MCF 10A (cell line): ENCODE measurements at regions of chr1 and their contacts with region 1.

Region 1: DNA sequence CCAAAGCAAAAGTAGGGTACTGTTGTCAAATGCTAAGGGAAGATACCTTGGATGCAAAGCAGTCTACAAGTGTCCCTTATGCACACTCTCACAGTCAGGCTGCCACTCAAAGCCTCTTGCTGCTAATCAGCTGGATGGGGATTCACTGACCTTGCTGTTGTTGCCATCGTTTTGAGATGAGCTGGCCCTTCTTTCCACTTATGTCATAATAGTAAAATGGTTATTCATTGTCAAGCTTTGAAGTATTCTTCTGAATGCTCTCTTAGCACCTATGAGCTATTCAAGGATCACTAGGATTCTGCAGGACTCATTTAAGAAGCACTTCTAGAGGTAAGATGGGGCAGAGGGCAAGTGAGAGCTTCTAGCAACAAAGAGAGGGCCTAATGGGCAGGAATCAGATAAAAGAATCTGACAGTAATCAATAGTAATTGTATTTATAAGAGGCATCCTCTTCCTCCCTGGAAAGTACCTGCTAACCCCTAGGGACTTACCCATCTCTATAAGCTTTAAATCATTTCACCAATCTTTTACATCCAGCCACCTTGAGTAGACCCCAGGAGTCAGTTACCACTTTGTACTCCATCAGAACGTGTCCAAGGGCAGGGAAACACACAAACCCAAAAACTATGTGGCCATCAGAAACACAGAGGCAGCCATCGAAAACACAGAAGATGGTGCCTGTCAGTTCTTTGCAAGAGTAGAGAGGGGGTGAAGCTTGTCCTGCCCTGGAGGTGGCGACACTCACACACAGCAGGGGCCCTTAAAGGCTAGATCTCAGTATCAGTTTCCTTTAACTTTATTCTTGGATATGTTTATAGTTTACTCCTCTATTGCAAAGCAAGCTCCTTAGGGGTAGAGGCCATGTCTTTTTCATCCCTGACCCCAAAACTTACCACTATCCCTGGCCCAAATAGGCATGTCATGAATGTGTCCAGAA is 103.7 kb upstream of the NFIA start:
- DNase-seq: peak; percentile 62
- H3K4me3 Mint-ChIP-seq: no peak overlapping the region
- H3K27ac Mint-ChIP-seq: no peak overlapping the region
- H3K4me1 Mint-ChIP-seq: peaks cover 3% of the 10 kb centered on the region
- H3K27me3 Mint-ChIP-seq: no peaks in the 10 kb centered on the region
- CTCF ChIP-seq: peak; percentile 76

Region 2: GRCh38 chr1:60281360-60281932 is 697.2 kb before region 1 on chr1:
- CTCF ChIA-PET with region 1: interaction called, 12 read pairs
- POLR2A ChIA-PET with region 1: no interaction called
- intact Hi-C with region 1: loop called (anchors 2 kb)
- DNase-seq: peak; percentile 85
- H3K4me3 Mint-ChIP-seq: no peak overlapping the region
- H3K27ac Mint-ChIP-seq: no peak overlapping the region
- H3K4me1 Mint-ChIP-seq: peaks cover 17% of the 10 kb centered on the region
- H3K27me3 Mint-ChIP-seq: no peaks in the 10 kb centered on the region
- CTCF ChIP-seq: peak; percentile 94

Region 3: DNA sequence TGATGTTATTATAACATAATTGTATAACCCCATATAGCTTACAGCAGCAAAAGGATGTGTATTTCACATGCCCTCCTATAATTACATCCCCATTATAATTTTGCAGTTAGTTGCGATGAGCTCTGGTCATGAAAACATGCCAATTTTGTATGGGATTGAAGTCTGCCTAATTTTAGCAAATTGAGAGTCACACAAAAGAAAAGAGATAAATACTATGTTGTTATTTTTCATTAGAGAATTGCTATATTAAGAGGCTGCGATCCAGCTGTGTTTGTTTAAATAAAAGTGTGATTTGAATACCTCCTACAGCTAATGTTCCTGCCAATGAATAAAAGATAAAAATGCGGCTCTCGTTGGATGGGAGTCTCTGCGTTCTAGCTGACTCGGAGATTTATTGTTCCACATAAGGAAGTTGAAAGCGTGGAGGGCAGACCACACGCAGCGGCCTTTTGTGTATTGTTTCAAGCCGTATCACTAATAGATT is 357.3 kb before region 1 on chr1:
- CTCF ChIA-PET with region 1: no interaction called
- POLR2A ChIA-PET with region 1: no interaction called
- intact Hi-C with region 1: no loop called
- DNase-seq: no peak
- H3K4me3 Mint-ChIP-seq: no peak overlapping the region
- H3K27ac Mint-ChIP-seq: no peak overlapping the region
- H3K4me1 Mint-ChIP-seq: no peaks in the 10 kb centered on the region
- H3K27me3 Mint-ChIP-seq: no peaks in the 10 kb centered on the region
- CTCF ChIP-seq: no peak

Region 4: DNA sequence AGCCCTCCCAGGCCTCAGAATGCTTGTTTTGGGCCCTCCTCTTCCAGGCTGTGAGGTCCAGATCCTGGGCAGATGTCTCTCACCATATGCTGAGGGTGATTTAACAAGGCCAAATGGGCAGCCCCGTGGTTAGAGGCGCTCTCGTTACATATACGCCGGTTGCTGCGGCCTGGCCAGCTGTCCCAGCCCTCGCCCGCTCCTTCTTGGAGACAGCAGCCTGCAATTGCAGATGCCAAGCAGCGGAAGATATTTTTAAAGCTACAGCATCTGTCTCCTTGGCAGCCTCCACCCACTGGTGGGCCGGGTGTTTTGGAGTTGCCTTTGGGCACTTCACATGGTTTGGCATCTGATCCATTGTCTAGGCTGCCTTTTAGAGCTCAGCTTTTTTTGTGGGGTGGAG is 75.1 kb before region 1 on chr1:
- CTCF ChIA-PET with region 1: no interaction called
- POLR2A ChIA-PET with region 1: no interaction called
- intact Hi-C with region 1: no loop called
- DNase-seq: no peak
- H3K4me3 Mint-ChIP-seq: no peak overlapping the region
- H3K27ac Mint-ChIP-seq: no peak overlapping the region
- H3K4me1 Mint-ChIP-seq: no peaks in the 10 kb centered on the region
- H3K27me3 Mint-ChIP-seq: no peaks in the 10 kb centered on the region
- CTCF ChIP-seq: no peak

Region 5: GRCh38 chr1:61005614-61006580 is 27.2 kb after region 1 on chr1:
- CTCF ChIA-PET with region 1: interaction called, 14 read pairs
- POLR2A ChIA-PET with region 1: no interaction called
- intact Hi-C with region 1: no loop called
- DNase-seq: no peak
- H3K4me3 Mint-ChIP-seq: no peak overlapping the region
- H3K27ac Mint-ChIP-seq: no peak overlapping the region
- H3K4me1 Mint-ChIP-seq: no peaks in the 10 kb centered on the region
- H3K27me3 Mint-ChIP-seq: no peaks in the 10 kb centered on the region
- CTCF ChIP-seq: no peak

Region 6: GRCh38 chr1:61049850-61050540 is 71.3 kb after region 1 on chr1:
- CTCF ChIA-PET with region 1: interaction called, 100 read pairs
- POLR2A ChIA-PET with region 1: interaction called, 6 read pairs
- intact Hi-C with region 1: no loop called
- DNase-seq: peak; percentile 90
- H3K4me3 Mint-ChIP-seq: peak overlapping the region; percentile 76
- H3K27ac Mint-ChIP-seq: peak overlapping the region; percentile 19
- H3K4me1 Mint-ChIP-seq: peaks cover 20% of the 10 kb centered on the region
- H3K27me3 Mint-ChIP-seq: no peaks in the 10 kb centered on the region
- CTCF ChIP-seq: peak; percentile 93

Region 7: DNA sequence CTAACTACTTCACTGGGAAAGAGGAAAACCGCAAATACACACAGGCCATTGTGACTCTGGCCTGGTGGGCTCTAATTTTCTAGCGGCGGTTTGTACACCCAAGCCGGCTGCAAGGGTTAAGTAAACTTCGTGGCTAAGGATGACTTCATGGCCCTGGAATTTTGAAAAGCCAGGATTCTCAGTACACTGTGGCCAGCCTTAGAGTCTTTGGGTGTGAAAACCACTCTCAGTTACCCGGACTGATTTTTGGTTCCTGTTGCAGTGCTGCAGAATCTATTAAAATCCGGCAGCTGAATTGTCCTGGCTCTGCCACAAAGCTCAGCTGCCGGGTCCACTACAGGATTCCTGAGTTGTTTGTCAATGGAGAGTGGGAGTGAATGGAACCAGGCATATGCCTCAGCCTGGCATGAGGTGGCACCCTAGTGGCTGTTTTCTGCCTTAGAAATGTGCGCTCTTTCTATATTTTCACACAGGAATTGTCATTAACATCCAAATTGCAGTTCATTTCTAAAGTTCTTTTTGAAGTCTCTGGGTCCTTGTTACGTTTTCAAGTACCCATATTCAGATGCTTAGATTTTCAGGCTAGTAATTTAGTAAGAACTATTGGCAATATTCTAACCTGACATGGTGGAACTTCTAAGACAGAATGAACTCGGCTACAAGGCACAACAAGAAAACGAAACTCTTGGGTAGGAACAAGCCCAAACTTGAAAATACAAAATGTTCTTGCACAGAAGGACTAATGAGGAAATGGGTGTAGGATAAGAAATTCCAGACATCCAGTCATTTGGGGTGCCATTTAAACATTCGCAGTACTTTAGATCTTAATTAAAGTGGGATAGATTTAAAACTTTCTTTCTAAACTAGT is 359.5 kb after region 1 on chr1:
- CTCF ChIA-PET with region 1: interaction called, 29 read pairs
- POLR2A ChIA-PET with region 1: interaction called, 5 read pairs
- intact Hi-C with region 1: loop called (anchors 1 kb)
- DNase-seq: peak; percentile 91
- H3K4me3 Mint-ChIP-seq: peak overlapping the region; percentile 70
- H3K27ac Mint-ChIP-seq: peak overlapping the region; percentile 96
- H3K4me1 Mint-ChIP-seq: peaks cover 28% of the 10 kb centered on the region
- H3K27me3 Mint-ChIP-seq: no peaks in the 10 kb centered on the region
- CTCF ChIP-seq: peak; percentile 81

Region 8: DNA sequence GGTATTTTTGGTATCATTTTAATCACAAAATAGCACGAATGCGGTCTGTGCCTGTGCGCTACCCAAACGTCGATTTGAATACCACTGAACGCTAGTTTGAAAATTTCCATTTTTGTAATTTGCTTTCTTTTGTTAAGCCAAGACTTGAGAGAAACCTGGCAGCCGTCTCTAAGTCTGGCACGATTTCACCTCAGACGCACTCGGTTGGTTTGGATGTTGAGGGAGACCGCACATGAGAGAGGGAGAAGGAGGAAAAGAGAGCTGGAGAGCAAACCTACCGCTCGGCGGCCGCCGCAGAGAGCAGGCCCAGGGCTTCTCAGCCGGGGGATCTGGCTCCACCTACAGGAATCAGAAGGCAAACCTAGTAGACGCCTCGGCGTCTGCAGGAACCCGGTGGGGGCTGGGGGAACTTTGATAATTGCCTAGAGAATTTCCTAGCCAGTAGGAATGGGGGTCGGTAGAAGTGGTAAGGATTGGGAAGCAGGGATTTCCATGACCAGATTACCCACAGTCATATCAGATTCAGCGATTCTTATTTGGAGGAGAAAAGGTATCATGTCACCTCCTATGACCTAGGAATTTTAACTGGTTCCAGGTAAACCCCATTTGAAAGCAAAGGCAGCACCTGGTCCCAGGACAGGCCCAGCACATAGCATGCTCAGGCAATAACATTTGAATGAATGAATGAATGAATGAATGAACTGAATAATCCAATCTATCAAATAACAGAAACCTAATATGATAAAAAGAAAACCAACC is 663.1 kb after region 1 on chr1:
- CTCF ChIA-PET with region 1: interaction called, 10 read pairs
- POLR2A ChIA-PET with region 1: no interaction called
- intact Hi-C with region 1: no loop called
- DNase-seq: peak; percentile 39
- H3K4me3 Mint-ChIP-seq: no peak overlapping the region
- H3K27ac Mint-ChIP-seq: no peak overlapping the region
- H3K4me1 Mint-ChIP-seq: peaks cover 16% of the 10 kb centered on the region
- H3K27me3 Mint-ChIP-seq: no peaks in the 10 kb centered on the region
- CTCF ChIP-seq: peak; percentile 36